ENCODE measurements at regions of chr19 and their contacts with region 1.

Region 1: DNA sequence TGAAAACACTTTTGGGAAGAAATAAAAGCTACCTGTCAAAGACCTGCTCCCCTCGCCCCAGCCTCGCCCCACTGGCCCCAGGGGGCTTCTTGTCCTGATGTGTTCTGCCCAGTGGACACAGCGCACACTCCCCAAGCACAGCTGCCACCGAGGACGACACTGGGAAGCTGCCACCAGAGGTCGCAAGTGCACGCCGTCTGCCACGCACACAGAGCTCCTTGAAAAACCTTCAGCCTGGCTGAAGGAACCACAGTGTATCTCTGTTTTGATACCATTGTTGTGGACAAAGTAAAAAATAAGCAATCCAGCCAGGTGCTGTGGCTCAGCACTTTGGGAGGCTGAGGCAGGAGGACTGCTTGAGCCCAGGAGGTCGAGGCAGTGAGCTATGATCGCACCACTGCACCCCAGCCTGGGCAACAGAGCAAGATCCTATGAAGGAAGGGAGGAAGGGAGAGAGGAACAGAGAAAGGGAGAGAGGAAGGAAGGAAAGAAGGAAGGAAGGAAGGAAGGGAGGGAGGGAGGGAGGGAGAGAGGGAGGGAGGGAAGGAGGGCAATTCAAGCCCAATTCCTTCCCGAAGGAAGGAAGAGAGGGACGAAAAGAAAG is 57.3 kb downstream of the CEBPG start:
- DNase-seq: no peak
- ATAC-seq: peak; percentile 80

Region 2: GRCh38 chr19:33394006-33394849 is 36.5 kb before region 1 on chr19:
- intact Hi-C with region 1: no loop called
- DNase-seq: peak; percentile 78
- ATAC-seq: peak; percentile 53

Region 3: DNA sequence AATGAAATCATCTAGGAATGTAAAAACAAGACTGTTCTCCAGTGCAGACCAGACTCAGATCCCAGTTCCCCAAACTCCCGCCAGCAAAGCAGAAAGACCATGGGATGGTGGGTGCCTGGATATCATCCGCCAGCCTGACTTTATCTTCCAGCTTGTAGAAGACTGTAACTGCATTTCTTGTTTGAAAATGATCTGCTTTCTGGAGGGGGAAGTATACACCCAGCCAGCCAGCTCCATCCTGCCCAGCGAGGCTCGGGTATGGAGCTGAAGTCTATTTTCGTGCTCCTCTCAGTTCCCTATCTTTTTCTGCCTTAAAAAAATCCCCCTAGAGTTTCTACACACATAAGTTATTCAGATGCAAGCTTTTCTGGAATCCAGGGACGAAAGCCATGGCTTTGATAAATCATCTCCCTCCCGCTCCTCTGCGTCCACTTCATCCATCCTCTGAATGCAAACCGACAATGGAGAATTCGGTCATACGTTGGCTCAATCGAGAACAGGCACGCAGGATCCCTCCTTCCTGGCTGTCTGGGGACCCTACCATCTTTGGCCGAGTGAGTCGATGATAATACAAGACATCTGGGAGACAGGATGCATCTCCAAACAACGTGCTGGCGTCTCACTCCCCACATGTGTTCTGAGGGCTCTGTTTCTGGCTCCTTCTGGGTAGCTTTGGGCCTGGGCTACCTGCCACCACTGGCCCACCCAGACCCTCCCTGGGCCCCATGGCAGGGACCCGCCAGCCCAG is 26.1 kb before region 1 on chr19:
- intact Hi-C with region 1: no loop called
- DNase-seq: peak; percentile 51
- ATAC-seq: peak; percentile 27

Region 4: DNA sequence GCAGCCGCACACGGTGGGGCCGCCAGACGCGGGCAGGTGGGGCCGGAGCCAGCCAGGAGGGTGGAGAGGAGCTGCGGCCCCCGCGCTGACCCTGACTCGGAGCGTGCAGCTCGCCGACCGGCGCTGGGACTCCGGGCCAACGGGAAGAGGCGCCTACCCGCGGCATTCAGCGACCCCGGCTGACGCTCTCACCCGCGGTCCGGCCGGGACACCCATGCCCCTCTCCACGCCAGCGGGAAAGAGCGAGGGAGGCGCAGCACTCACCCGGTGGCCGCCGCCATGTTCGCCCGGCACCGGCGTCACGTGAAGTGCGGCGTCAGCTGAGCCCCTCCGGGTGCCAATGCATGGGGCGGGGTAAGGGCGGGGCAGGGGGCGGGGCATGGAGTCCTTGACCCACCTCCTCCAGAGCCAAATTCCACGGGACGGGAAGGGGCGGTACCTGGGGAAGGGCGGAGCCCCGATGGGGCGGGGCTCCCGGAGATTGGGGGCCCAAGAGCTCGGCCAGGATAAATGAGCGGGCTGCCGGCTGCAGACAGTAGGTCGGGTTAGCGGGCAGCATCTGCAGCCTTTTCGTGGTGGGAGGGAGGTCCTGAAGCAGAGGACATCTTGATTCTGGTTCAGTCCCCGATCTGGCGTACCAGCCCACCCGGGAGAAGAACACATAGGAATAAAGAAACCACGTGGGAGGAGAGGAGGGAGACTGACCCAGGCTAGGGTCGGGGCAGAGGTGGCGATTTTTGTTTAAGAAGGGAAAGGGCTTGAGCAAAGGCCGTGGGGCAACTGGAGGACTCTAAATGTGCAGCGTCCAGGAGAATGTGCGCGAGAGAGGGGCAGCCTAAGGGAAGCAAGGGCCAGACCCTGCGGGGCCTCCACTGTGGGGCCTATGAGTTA is 90.9 kb after region 1 on chr19 and contains the start of gene PEPD:
- intact Hi-C with region 1: loop called (anchors 10 kb)
- DNase-seq: peak; percentile 94
- ATAC-seq: peak; percentile 98
- total RNA-seq, gene PEPD: 32.1 TPM